ENCODE measurements at regions of chr20 and their contacts with region 1.

Region 1: DNA sequence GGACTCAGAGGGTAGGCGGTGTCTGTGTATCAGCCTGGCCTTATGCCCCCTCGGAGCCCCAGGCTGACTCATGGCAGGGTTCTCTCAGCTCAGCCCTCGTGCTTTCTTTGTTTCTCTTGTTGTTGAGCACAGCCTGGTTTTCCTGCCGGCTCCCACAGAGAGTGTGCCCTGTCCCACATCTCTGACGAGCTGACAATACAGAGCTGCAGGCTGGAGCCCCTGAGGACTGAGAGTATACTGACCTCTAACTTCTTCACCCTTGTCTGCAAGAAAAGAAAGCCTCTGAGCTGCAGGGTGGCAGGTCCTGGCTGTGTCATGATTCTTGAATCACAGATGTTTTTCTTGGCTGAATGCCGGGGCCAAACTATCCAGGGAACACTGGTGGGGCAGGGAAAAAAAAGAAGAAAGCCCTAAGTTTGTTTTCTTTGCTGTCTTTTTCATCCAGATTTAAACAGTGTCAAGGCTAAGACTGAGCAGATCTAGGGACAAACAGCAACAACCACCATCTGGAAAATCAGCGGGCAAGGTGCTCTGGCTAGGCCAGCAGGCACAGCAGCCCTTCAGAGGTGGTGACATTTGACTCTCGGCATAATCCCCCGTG is 63.3 kb upstream of the ZNF133 start:
- DNase-seq: peak; percentile 91
- H3K4me3 Mint-ChIP-seq: peak overlapping the region; percentile 63
- H3K27ac Mint-ChIP-seq: peak overlapping the region; percentile 92
- H3K4me1 Mint-ChIP-seq: peaks cover 21% of the 10 kb centered on the region
- H3K27me3 Mint-ChIP-seq: no peaks in the 10 kb centered on the region
- CTCF ChIP-seq: no peak

Region 2: DNA sequence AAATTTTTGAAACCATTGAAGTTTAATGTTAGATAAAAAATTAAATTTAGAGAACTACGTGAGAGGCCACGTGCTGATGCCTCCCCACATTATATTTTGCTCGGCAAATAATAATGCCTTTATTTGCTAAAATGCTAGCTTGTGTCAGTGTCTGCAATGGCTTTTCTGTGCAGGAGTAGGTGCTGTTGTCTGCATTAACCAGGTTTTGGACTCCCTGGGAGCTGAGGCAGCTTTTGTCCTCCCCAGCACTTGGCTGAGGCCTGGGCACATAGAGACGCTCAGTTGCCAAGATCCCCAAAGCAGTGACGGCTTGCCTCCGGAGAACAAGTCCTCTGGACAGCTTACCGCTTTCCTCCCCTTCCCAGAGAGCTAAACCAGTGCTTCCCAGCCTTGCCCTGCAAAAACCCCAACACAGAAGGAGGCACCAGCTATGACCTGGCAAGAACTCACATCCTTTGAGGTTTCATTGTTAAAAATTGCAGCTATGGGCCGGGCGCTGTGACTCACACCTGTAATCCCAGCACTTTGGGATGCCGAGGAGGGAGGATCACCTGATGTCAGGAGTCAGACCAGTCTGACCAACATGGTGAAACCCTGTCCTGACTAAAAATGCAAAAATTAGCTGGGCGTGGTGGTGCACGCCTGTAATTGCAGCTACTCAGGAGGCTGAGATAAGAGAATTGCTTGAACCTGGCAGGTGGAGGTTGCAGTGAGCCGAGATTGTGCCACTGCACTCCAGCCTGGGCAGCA is 27.5 kb before region 1 on chr20:
- CTCF ChIA-PET with region 1: interaction called, 22 read pairs
- POLR2A ChIA-PET with region 1: interaction called, 15 read pairs
- intact Hi-C with region 1: no loop called
- DNase-seq: peak; percentile 87
- H3K4me3 Mint-ChIP-seq: no peak overlapping the region
- H3K27ac Mint-ChIP-seq: peak overlapping the region; percentile 89
- H3K4me1 Mint-ChIP-seq: no peaks in the 10 kb centered on the region
- H3K27me3 Mint-ChIP-seq: no peaks in the 10 kb centered on the region
- CTCF ChIP-seq: peak; percentile 18

Region 3: GRCh38 chr20:18237682-18238081 is 12.6 kb after region 1 on chr20:
- CTCF ChIA-PET with region 1: interaction called, 8 read pairs
- POLR2A ChIA-PET with region 1: interaction called, 16 read pairs
- intact Hi-C with region 1: no loop called
- DNase-seq: no peak
- H3K4me3 Mint-ChIP-seq: no peak overlapping the region
- H3K27ac Mint-ChIP-seq: no peak overlapping the region
- H3K4me1 Mint-ChIP-seq: no peaks in the 10 kb centered on the region
- H3K27me3 Mint-ChIP-seq: no peaks in the 10 kb centered on the region
- CTCF ChIP-seq: no peak

Measured in MCF 10A (cell line).